Mucosa of descending colon (tissue), 3 donors: ENCODE measurements at regions of chr13 and their contacts with region 1.

Region 1: GRCh38 chr13:30572859-30573275 is 44.9 kb upstream of the USPL1 start:
- DNase-seq: peak in 1 of 3 donors; percentile 24
- ATAC-seq: peak; percentile 72
- H3K4me3 ChIP-seq: no peak overlapping the region
- H3K4me1 ChIP-seq: no peaks in the 10 kb centered on the region
- CTCF ChIP-seq: no peak

Region 2: DNA sequence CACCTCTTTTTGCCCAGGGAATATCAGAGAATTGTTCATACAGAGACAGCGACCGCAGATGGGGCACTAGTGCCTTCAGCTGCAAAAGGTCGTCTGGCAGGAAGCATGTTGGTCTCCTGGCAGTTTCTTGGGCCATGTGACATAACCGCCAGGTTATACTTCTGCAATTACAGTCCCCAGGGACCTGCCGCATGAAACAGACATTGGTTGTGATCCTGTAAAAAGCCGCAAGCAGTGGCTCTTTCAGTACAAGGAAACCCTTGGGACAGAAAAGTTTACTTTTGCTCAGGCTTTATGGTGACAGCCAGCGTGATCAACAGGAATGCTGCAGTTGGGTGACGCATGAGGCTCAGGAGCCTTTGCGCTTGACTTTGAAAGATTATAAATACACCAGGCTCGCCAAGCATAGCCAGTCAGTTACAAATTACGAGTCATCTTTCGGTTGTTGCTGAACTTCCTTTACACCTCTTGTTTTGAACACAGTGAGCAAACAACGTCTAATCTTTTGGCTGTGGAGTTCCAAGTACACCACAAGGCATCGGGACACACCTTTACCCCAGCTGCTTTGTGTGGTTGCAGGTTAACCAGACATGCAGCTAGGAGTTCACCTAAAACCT is 201.1 kb before region 1 on chr13:
- intact Hi-C with region 1: no loop called
- DNase-seq: peak; percentile 51 to 75 (median 75)
- ATAC-seq: peak; percentile 85
- H3K4me3 ChIP-seq: no peak overlapping the region
- H3K4me1 ChIP-seq: peaks cover 24% of the 10 kb centered on the region
- CTCF ChIP-seq: no peak

Region 3: DNA sequence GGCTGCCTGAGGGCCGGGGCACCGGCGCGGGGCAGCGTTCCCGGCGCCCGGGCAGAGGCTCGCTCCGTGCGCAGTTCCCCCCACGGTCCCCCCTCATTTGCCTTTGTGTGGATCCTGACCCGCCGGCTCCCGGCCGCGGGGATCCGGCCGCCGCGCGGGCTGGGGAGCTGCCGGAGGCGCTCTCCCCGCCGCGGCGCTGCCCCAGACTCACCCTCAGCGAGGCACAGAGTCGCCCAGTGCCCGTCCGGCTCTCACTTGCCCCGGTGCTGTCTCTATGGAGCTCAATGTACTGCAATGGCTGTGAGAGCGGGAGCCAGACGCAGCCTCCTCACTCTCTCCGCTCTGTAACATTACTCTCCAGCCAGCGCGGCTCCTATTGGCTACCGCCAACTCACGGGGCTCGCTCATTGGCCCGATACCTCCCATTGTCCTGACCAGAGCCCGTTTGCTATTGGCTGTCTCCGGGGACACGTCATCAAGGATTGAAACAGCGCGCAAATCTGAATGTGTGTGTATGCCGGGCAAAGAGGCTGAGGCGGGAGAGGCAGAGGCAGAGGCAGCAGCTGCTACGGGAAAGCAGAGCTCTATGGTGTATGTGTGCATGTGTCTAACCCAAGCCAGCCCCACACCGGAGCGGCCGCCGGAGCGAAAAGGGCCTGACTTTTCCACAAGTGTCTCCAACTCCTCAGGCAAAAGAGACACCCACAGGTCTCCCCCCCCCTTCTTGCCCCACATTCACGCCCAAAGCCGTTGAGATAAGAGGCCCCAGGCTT is 107.1 kb before region 1 on chr13 and contains the start of gene HMGB1:
- intact Hi-C with region 1: loop called in 1 of 2 experiments (anchors 10 kb)
- DNase-seq: peak; percentile 97 to 99 (median 98)
- ATAC-seq: peak; percentile 94
- H3K4me3 ChIP-seq: peak within 1 kb of the TSS; percentile 81
- H3K4me1 ChIP-seq: peaks cover 16% of the 10 kb centered on the region
- CTCF ChIP-seq: no peak
- total RNA-seq, gene HMGB1: 178 to 303 (median 259) TPM